Activated CD8-positive, alpha-beta T cell treated with anti-CD3 and anti-CD28 coated beads for 36 hours (primary cell): ENCODE measurements at regions of chr18 and their contacts with region 1.

Region 1: DNA sequence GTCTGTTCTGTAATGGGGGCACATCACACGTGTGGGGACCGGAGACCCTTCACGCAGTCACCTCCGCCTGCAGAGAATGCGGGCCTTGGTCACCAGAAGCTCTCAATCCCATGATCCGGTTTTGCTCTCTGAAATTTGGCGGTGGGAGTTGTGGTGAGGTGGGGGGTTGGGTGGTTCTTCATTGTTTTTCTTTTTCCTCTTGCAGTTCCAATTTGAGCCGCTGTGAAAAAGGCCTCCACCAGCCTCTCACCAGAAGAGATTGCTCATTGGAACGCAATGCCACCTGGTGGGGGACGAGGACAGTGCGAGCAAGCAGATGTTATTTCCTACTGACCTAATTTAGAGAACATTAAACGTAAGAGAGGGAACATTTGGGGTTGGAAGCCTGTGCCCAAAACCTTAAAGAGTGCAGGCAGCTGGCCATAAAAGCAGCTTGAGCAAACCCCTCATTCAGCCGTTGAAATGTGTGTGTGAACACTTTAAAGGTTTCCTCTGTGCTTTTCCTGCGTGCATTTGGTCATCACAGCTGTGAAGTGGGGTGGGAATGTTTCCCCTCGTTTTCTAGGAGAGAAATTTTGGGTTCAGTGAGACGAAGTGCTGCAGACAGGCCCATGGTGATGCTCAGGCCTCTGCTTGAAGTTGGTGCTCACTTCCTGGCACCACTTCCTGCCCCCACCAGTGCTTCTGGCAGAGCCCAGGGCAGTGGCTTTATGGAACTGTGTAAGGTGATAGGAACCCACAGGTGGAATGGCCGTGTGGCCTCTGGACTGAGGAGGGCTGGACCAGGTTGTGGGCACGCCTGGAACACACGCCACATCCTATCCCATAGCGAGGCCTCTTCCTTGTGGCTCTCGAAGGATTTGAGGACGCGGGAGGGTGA is 61.7 kb downstream of the ZCCHC2 start:
- DNase-seq: peak; percentile 94
- ATAC-seq: peak; percentile 85
- H3K4me3 Mint-ChIP-seq: peak overlapping the region; percentile 4
- H3K27ac Mint-ChIP-seq: peak overlapping the region; percentile 85
- H3K4me1 Mint-ChIP-seq: peaks cover 40% of the 10 kb centered on the region
- H3K27me3 Mint-ChIP-seq: no peaks in the 10 kb centered on the region
- CTCF ChIP-seq: peak; percentile 99

Region 2: GRCh38 chr18:62249478-62250097 is 334.9 kb before region 1 on chr18:
- CTCF ChIA-PET with region 1: interaction called, 10 read pairs
- POLR2A ChIA-PET with region 1: no interaction called
- intact Hi-C with region 1: no loop called
- DNase-seq: peak; percentile 94
- ATAC-seq: peak; percentile 74
- H3K4me3 Mint-ChIP-seq: no peak overlapping the region
- H3K27ac Mint-ChIP-seq: no peak overlapping the region
- H3K4me1 Mint-ChIP-seq: no peaks in the 10 kb centered on the region
- H3K27me3 Mint-ChIP-seq: no peaks in the 10 kb centered on the region
- CTCF ChIP-seq: peak; percentile 92

Region 3: GRCh38 chr18:62445386-62445917 is 139.0 kb before region 1 on chr18:
- CTCF ChIA-PET with region 1: no interaction called
- POLR2A ChIA-PET with region 1: no interaction called
- intact Hi-C with region 1: no loop called
- DNase-seq: peak; percentile 11
- ATAC-seq: peak; percentile 61
- H3K4me3 Mint-ChIP-seq: no peak overlapping the region
- H3K27ac Mint-ChIP-seq: no peak overlapping the region
- H3K4me1 Mint-ChIP-seq: peaks cover 4% of the 10 kb centered on the region
- H3K27me3 Mint-ChIP-seq: no peaks in the 10 kb centered on the region
- CTCF ChIP-seq: no peak

Region 4: GRCh38 chr18:62522504-62523254 is 61.8 kb before region 1 on chr18 and contains the start of gene ZCCHC2:
- CTCF ChIA-PET with region 1: interaction called, 4 read pairs
- POLR2A ChIA-PET with region 1: no interaction called
- intact Hi-C with region 1: loop called (anchors 2 kb)
- DNase-seq: peak; percentile 97
- ATAC-seq: peak; percentile 80
- H3K4me3 Mint-ChIP-seq: peak within 1 kb of the TSS; percentile 84
- H3K27ac Mint-ChIP-seq: peak within 1 kb of the TSS; percentile 89
- H3K4me1 Mint-ChIP-seq: peaks cover 20% of the 10 kb centered on the region
- H3K27me3 Mint-ChIP-seq: no peaks in the 10 kb centered on the region
- CTCF ChIP-seq: no peak
- total RNA-seq, gene ZCCHC2: 31.7 to 33.4 TPM

Region 5: GRCh38 chr18:62566199-62566598 is 18.3 kb before region 1 on chr18:
- CTCF ChIA-PET with region 1: interaction called, 27 read pairs
- POLR2A ChIA-PET with region 1: interaction called, 4 read pairs
- intact Hi-C with region 1: no loop called
- DNase-seq: peak; percentile 23
- ATAC-seq: no peak
- H3K4me3 Mint-ChIP-seq: no peak overlapping the region
- H3K27ac Mint-ChIP-seq: no peak overlapping the region
- H3K4me1 Mint-ChIP-seq: peaks cover 3% of the 10 kb centered on the region
- H3K27me3 Mint-ChIP-seq: no peaks in the 10 kb centered on the region
- CTCF ChIP-seq: no peak

Region 6: DNA sequence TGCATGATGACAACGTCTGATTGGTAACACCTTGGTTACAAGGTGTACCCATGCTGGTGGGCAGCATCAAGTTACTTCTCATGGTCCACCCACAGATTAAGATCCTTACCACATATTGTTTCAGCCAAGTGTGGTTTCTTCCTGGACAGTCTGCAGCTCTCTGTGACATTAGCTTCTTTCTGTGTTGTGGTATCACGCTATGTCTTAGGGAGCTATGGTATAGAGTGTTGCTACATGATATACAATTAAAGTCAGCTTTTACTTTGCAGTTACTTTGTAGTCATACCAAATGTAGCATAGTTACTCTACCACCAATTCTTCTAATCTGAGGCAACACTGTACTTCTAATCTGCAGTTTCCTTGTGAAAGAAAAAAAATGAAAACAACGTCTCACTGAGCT is 12.8 kb before region 1 on chr18:
- CTCF ChIA-PET with region 1: interaction called, 27 read pairs
- POLR2A ChIA-PET with region 1: no interaction called
- intact Hi-C with region 1: no loop called
- DNase-seq: no peak
- ATAC-seq: peak; percentile 67
- H3K4me3 Mint-ChIP-seq: no peak overlapping the region
- H3K27ac Mint-ChIP-seq: peak overlapping the region; percentile 43
- H3K4me1 Mint-ChIP-seq: peaks cover 15% of the 10 kb centered on the region
- H3K27me3 Mint-ChIP-seq: no peaks in the 10 kb centered on the region
- CTCF ChIP-seq: no peak

Region 7: GRCh38 chr18:62982600-62983251 is 398.2 kb after region 1 on chr18:
- CTCF ChIA-PET with region 1: interaction called, 30 read pairs
- POLR2A ChIA-PET with region 1: no interaction called
- intact Hi-C with region 1: loop called (anchors 5 kb)
- DNase-seq: peak; percentile 69
- ATAC-seq: peak; percentile 71
- H3K4me3 Mint-ChIP-seq: no peak overlapping the region
- H3K27ac Mint-ChIP-seq: no peak overlapping the region
- H3K4me1 Mint-ChIP-seq: no peaks in the 10 kb centered on the region
- H3K27me3 Mint-ChIP-seq: no peaks in the 10 kb centered on the region
- CTCF ChIP-seq: peak; percentile 85